ENCODE measurements at regions of chr7 and their contacts with region 1.

Region 1: DNA sequence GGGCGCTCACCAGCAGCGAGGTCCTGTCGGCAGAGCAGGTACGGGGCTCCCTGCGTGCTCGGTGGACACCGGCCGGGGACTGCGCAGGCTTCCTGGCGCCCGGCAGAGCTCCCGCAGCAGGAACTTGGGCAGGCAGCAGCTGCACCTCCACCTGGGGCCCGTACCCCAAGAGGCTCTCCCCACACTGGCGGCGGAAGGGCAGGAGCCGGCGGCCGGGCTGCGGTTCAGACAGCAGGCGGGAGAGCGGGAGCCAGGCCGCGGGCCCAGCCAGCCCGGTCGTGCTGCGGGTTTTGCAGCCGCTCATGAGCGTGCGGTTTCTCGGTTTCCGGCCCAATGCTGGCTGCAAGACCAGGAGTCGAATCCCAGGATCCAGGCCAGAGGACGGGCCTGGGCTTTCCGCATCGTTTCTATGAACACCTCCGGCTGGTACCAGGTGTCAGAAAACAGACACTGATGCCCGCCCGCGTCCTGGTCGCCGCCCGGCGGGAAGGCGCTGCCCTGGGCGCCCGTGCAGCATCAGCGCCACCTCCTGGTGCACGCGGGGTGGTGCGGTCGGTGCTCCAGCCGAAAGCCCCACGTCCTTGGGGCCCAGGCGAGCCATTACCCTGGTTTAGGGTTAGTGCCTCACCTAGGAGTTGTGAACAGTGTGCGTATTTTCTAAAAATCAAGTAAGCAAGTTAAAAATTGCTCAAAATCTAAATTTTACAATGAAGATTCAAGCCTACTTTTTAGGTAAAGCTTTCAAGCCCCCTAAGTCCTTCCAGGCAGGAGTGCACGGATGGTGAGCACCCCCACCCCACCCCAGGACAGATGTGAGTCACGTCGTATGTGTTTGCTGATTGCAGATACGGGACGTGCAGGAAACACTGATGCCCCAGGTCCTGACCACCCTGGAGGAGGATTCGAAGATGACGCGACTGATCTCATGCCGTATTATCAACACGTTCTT is 47.4 kb upstream of the PRKAR1B start:
- DNase-seq: peak in 1 of 2 donors; percentile 76
- ATAC-seq: peak; percentile 77

Region 2: DNA sequence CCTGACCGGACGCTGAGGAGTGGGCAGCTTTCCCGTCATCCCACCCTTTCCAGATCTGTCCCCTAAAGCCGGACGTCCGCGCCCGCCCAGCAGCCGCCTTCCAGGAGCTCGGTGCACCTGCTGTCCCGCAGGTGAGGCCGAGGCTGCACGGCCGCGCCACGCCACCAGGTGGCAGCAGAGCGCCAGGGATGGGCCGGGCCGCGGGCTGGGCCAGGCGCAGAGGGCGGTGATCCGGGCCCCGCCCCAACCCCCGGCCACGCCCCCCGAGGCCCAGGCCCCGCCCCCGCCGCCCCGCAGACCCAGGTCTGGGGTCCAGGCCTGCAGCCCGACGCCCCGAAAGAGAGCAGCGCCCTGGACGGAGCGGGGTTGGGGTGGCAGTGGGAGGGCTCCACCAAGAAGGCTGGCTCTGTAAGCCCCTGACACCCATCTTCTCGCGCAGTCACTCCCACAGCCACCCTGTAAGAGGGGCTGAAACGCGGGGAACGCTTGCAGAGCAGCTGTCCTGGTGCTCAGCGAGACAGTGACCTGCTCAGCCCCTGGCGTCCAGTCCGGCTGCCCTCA is 452.2 kb before region 1 on chr7:
- intact Hi-C with region 1: loop called (anchors 5 kb)
- DNase-seq: peak; percentile 70 to 88
- ATAC-seq: peak; percentile 57

Measured in left colon (tissue), 2 donors.